ENCODE measurements at regions of chr1 and their contacts with region 1.

Region 1: GRCh38 chr1:33349778-33350610 is 29.1 kb upstream of the A3GALT2 start:
- DNase-seq: peak; percentile 88
- ATAC-seq: peak; percentile 86
- H3K4me3 ChIP-seq: peak overlapping the region; percentile 45 to 76 (median 74)
- H3K4me3 Mint-ChIP-seq: peak overlapping the region; percentile 98
- H3K27ac ChIP-seq: peak overlapping the region; percentile 71 to 81
- H3K27ac Mint-ChIP-seq: peak overlapping the region; percentile 90
- H3K4me1 ChIP-seq: peaks cover 16 to 20% of the 10 kb centered on the region in 2 donors
- H3K4me1 Mint-ChIP-seq: peaks cover 36% of the 10 kb centered on the region
- H3K27me3 ChIP-seq: peaks cover 0 to 3% (median 0%) of the 10 kb centered on the region in 4 experiments
- H3K27me3 Mint-ChIP-seq: no peaks in the 10 kb centered on the region
- CTCF ChIP-seq: no peak

Region 2: GRCh38 chr1:33256701-33257399 is 93.1 kb before region 1 on chr1:
- CTCF ChIA-PET with region 1: no interaction called
- POLR2A ChIA-PET with region 1: no interaction called
- intact Hi-C with region 1: loop called (anchors 1 kb)
- DNase-seq: peak; percentile 72
- ATAC-seq: peak; percentile 62
- H3K4me3 ChIP-seq: peak overlapping the region; percentile 34 to 91 (median 79)
- H3K4me3 Mint-ChIP-seq: peak overlapping the region; percentile 98
- H3K27ac ChIP-seq: peak overlapping the region; percentile 19 to 42
- H3K27ac Mint-ChIP-seq: peak overlapping the region; percentile 97
- H3K4me1 ChIP-seq: peaks cover 20 to 25% of the 10 kb centered on the region in 2 donors
- H3K4me1 Mint-ChIP-seq: peaks cover 39% of the 10 kb centered on the region
- H3K27me3 ChIP-seq: no peaks in the 10 kb centered on the region
- H3K27me3 Mint-ChIP-seq: no peaks in the 10 kb centered on the region
- CTCF ChIP-seq: no peak

Region 3: DNA sequence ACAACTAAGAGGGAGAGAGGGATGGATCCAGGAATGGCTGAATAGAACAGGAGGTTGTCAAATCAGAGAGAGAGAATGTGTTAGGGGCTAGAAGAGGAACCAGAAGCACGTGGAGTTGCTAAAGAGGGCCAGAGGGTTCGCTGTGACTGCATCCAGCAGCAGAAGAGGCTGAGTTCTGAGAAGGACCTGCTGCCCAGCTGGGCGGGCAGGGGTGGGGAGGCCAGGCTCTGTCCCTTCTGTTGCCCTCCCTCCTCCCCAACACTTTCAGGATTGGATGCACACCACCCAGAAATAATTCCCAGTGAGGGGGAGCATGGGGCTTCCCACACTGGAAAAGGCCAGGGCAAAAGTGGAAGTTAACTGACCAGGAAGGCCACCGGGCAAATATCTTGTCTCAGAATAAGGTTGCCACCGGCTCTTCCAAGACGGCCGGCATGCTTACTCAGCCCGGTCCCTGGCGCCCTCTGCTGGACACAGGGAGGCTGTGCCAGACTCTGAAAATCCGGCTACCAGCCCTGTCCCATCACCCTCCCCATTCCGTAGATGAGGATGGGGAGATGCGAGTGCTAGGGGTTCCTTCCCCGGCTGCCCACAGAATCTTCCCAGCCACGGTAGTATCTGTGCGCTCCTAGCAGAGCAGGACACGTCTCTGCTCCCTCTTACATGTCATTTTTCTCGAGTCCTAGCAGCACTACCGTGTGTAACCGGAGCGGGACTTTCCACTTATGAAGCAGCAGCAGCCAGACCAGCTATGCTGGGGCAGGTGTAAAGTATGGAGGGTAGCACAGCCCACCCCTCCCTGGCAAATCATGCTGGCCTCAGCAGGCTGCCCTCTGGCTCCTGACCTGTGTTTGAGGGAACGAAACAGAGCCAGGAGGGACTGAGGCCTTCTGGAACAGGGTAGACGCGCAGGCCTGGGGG is 17.8 kb after region 1 on chr1:
- CTCF ChIA-PET with region 1: interaction called, 10 read pairs
- POLR2A ChIA-PET with region 1: interaction called, 4 read pairs
- intact Hi-C with region 1: no loop called
- DNase-seq: peak; percentile 85
- ATAC-seq: peak; percentile 94
- H3K4me3 ChIP-seq: no peak overlapping the region
- H3K4me3 Mint-ChIP-seq: no peak overlapping the region
- H3K27ac ChIP-seq: no peak overlapping the region
- H3K27ac Mint-ChIP-seq: no peak overlapping the region
- H3K4me1 ChIP-seq: peaks cover 4 to 5% of the 10 kb centered on the region in 2 donors
- H3K4me1 Mint-ChIP-seq: no peaks in the 10 kb centered on the region
- H3K27me3 ChIP-seq: peaks cover 0 to 10% (median 3%) of the 10 kb centered on the region in 4 experiments
- H3K27me3 Mint-ChIP-seq: peaks cover 18% of the 10 kb centered on the region
- CTCF ChIP-seq: peak; percentile 96

Region 4: DNA sequence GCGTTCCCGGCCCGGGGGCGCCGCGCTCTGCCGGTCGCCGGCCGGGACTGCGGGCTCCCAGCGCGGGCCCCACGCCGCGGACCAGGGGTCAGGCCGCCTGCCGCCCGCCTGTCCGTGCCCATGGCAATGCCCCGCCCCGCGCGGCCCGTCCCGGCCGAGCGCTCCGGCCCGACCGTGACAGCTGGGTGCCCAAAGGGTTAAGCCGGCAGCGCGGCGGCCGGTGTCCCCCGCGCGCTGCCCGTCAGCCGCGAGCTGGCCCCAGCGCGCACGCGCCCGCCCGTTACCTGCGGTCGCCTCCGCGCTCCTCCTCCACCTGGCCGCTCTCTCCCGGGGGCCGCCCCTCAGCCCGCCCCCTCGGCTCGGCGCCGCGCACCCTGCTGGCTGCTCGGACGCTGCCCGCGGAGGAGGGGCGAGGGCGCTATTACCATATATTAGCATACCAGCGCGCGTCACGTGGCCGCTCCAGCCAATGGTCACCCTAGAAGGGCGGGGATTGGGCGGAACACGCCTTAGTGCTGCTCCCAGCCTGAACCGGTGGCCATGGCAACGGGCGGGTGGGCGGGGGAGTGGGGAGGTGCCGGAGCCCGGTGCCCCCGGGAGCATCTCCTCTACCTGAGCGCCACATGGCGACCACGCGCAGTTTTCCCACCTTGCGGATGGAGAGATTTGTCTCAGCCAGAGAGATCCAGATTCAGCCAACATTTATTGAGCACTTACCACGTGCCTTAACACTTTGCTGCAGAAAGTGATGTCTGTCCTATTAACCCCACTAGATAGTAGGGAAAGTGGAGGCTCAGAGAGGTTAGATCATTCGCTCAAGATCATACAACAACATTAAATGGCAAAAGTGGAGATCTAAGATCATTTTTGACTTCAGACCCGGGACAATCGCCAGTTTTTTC is 80.9 kb after region 1 on chr1 and contains the start of gene PHC2:
- CTCF ChIA-PET with region 1: no interaction called
- POLR2A ChIA-PET with region 1: no interaction called
- intact Hi-C with region 1: loop called (anchors 1 kb)
- DNase-seq: peak; percentile 94
- ATAC-seq: peak; percentile 98
- H3K4me3 ChIP-seq: peak within 1 kb of the TSS in 3 of 5 experiments; percentile 43 to 61 (median 54)
- H3K4me3 Mint-ChIP-seq: peak within 1 kb of the TSS; percentile 83
- H3K27ac ChIP-seq: no peak within 1 kb of the TSS
- H3K27ac Mint-ChIP-seq: peak within 1 kb of the TSS; percentile 48
- H3K4me1 ChIP-seq: peaks cover 11 to 12% of the 10 kb centered on the region in 2 donors
- H3K4me1 Mint-ChIP-seq: peaks cover 5% of the 10 kb centered on the region
- H3K27me3 ChIP-seq: peaks cover 2 to 23% (median 12%) of the 10 kb centered on the region in 4 experiments
- H3K27me3 Mint-ChIP-seq: peaks cover 23% of the 10 kb centered on the region
- CTCF ChIP-seq: peak; percentile 19
- total RNA-seq, gene PHC2: 22.9 and 23.1 TPM in 2 replicates

Measured in B cell (primary cell).